Kidney (tissue), 22 donors: ENCODE measurements at regions of chr18 and their contacts with region 1.

Region 1: GRCh38 chr18:39276764-39277163 is 1711.2 kb upstream of the CELF4 start:
- DNase-seq: no peak
- H3K4me3 ChIP-seq: no peak overlapping the region
- H3K27ac ChIP-seq: no peak overlapping the region
- H3K4me1 ChIP-seq: no peaks in the 10 kb centered on the region
- H3K27me3 ChIP-seq: no peaks in the 10 kb centered on the region
- CTCF ChIP-seq: no peak

Region 2: DNA sequence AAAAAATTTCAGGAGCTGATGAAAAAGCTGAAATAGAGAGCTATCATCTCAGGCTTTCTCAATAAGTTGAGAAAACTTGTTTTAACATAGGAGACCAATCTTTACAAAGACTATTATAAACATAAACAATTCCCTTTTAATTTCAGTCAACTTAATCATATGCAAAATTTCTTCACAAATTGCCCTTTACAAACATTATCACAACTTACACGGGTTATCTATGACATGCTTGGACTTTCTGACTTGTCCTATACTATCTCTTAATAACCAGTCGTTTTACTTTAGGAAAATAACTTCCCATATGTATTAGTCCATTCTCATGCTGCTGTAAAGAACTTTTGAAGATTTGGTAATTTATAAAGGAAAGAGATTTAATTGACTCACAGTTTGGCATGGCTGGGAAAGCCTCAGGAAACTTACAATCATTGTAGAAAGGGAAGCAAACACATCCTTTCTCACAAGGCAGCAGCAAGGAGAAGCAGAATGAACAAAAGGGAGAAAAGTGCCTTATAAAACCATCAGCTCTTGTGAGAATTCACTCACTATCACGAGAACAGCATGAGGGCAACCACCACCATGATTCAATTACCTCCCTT is 127.5 kb before region 1 on chr18:
- intact Hi-C with region 1: loop called (anchors 10 kb)
- DNase-seq: no peak
- H3K4me3 ChIP-seq: no peak overlapping the region
- H3K27ac ChIP-seq: no peak overlapping the region
- H3K4me1 ChIP-seq: no peaks in the 10 kb centered on the region
- H3K27me3 ChIP-seq: no peaks in the 10 kb centered on the region
- CTCF ChIP-seq: no peak